Activated T-helper 1 cell treated with anti-CD3 and anti-CD28 coated beads, Interleukin-12 subunit alpha, Interleukin-12 subunit beta, Interleukin-2, Interleukin-4 antibody, amounts not matched to agents 30 ng/mL and 10 ng/mL and 1 ng/mL, durations not matched to agents 14 hours and 24 hours and 36 hours (primary cell): ENCODE measurements at regions of chr10 and their contacts with region 1.

Region 1: GRCh38 chr10:20267734-20268133 is 451.5 kb downstream of the PLXDC2 start:
- DNase-seq: no peak
- H3K4me3 Mint-ChIP-seq: no peak overlapping the region
- H3K27ac Mint-ChIP-seq: no peak overlapping the region
- H3K4me1 Mint-ChIP-seq: no peaks in the 10 kb centered on the region
- H3K27me3 Mint-ChIP-seq: no peaks in the 10 kb centered on the region

Region 2: DNA sequence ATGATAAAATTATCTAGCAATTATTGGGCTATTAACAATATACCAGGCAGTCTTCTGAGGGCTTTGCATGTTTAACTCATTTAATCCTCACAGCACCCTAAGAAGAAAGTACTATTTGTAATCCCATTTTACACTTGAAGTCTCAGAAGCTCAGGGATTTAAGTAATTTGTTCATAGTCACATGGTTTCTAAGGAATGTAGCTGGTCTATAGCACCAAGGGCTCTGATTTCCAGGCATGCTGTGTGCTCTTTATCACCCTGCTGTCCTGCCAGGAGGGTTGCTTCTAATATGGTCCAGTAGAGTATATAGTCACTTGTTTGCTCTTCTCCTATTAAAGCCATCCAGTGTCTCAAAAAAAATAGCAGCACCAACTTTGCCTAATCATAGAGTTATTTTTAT is 34.3 kb before region 1 on chr10:
- intact Hi-C with region 1: loop called (anchors 2 kb)
- DNase-seq: no peak
- H3K4me3 Mint-ChIP-seq: no peak overlapping the region
- H3K27ac Mint-ChIP-seq: no peak overlapping the region
- H3K4me1 Mint-ChIP-seq: no peaks in the 10 kb centered on the region
- H3K27me3 Mint-ChIP-seq: no peaks in the 10 kb centered on the region